K562 (cell line): ENCODE measurements at regions of chrX and their contacts with region 1.

Region 1: DNA sequence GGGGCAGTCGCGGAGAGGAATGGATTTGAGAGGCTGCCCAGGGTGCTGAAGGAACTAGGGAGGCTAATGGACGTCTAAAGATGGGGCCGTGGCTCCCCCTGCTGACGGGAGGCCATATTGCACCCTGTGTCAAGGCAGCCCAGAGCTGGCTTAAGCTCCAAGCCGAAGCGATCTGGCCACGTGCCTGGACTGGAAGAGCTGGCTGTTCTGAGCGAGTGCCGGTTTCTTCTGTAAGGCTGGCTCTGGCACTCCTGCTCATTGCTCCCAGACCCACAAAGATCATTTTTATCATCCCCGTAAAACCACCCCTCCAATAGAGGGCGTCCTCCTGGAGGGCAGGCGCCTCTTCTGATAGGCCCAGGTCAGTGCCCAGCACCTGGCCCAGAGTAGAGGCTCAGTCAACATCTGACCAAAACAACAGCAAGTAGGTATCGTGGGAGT is 5.6 kb downstream of the PNCK start:
- DNase-seq: peak; percentile 72 to 86 (median 74)
- ATAC-seq: peak; percentile 90
- H3K4me3 ChIP-seq: no peak overlapping the region
- H3K27ac ChIP-seq: no peak overlapping the region
- H3K4me1 ChIP-seq: peaks cover 5 to 43% of the 10 kb centered on the region in 2 experiments; a peak in 4 of 5 replicates
- H3K27me3 ChIP-seq: peaks cover 2 to 18% of the 10 kb centered on the region in 2 experiments; a peak in 3 of 5 replicates
- CTCF ChIP-seq: peak; percentile 82 to 91 (median 89)
- EP300 ChIP-seq: no peak
- POLR2A ChIP-seq: no peak
- RAD21 ChIP-seq: peak; percentile 62 to 76

Region 2: GRCh38 chrX:152941328-152942106 is 726.5 kb before region 1 on chrX:
- CTCF ChIA-PET with region 1: no interaction called
- POLR2A ChIA-PET with region 1: no interaction called
- in situ Hi-C with region 1: loop called (anchors 10 kb)
- intact Hi-C with region 1: no loop called
- DNase-seq: peak; percentile 91 to 95 (median 93)
- ATAC-seq: peak; percentile 97
- H3K4me3 ChIP-seq: peak overlapping the region; percentile 52
- H3K27ac ChIP-seq: peak overlapping the region; percentile 82
- H3K4me1 ChIP-seq: peaks cover 2 to 6% of the 10 kb centered on the region in 2 experiments; a peak in 4 of 5 replicates
- H3K27me3 ChIP-seq: no peaks in the 10 kb centered on the region; a peak in 1 of 5 replicates
- CTCF ChIP-seq: peak; percentile 83 to 89 (median 85)
- EP300 ChIP-seq: 0 out of 2 replicates have a peak, but pooled peaks have one; percentile 29
- POLR2A ChIP-seq: peak; percentile 44; the same call in 1 of the 2 replicates
- RAD21 ChIP-seq: peak; percentile 89 to 96

Region 3: DNA sequence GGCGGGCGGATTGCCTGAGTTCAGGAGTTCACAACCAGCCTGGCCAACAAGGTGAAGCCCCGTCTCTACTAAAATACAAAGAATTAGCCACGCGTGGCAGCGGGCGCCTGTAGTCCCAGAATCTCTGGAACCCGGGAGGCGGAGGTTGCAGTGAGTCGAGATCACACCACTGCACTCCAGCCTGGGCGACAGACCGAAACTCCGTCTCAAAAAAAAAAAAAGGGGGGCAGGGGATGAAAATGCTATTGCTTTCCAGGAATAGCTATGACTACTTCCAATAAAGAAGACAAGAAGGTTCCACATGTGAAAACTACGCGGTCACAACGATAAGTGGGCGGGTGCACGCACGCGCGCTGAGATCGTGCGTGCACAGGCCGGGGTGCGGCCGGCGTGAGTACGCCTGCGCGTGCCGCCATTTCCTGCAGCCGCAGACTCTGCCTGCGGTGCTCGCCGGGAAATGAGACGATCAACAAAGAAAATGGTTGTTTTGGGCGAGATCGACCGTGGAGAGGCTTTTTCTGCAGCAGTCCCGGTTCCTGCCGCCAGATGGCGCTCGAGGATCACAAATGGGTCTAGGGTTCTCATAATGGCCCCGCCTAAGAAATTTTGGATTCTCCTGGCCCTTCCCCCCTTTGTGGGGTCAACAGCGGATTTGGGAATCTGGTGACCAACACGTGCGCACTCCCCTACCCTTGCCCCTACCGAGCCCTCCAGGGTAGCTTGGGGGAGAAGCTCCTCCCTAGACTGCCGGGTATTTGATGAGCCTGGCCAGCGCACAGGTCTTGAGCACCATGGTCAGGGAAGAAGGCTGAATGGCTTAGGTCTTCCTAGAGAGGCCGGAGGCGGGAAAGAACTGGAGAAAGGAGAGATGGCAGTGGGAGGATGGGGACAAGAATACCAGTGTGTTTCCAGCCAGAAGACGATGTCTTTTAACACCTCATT is 709.2 kb before region 1 on chrX:
- CTCF ChIA-PET with region 1: no interaction called
- POLR2A ChIA-PET with region 1: no interaction called
- in situ Hi-C with region 1: no loop called
- intact Hi-C with region 1: loop called (anchors 10 kb)
- DNase-seq: peak; percentile 85 to 93 (median 88)
- ATAC-seq: peak; percentile 99
- H3K4me3 ChIP-seq: peak overlapping the region; percentile 3; the same call in 1 of the 2 replicates
- H3K27ac ChIP-seq: peak overlapping the region; percentile 59
- H3K4me1 ChIP-seq: peaks cover 11 to 13% of the 10 kb centered on the region in 2 experiments; a peak in 4 of 5 replicates
- H3K27me3 ChIP-seq: no peaks in the 10 kb centered on the region
- CTCF ChIP-seq: peak; percentile 77 to 94 (median 91)
- EP300 ChIP-seq: peak; percentile 35; the same call in 1 of the 2 replicates
- POLR2A ChIP-seq: peak; percentile 51; the same call in 1 of the 2 replicates
- RAD21 ChIP-seq: peak; percentile 84 to 95

Region 4: DNA sequence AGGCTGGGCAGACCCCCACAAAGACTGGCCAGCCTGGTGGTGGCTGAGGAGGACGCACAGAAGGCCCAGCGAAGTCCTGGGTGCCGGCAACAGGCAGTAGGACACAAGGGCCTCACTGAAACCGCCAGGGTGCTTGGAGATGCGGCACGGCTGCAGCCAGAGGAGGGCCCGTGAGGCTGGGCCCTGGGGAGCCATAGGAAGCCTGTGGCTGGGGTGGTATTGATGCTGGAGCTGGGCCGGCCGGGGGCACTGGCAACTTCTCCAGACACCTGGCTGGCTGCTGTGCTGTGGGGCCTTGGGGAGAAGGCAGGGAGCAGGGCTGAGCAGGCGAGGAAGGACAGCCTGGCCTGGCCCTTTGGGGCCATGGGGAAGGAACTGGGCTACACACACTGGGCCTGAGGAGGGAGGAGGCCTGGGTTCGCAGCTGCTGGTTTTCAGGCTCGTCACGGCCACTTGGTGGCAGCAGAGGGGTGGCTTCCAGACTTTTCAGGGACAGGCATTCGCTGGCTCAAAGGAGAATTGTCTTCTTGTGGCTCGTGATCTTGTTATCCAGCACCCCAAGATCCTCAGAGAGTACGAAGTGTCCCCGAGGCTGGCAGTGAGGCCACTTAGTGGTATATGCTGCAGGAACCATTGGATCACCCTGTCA is 113.3 kb before region 1 on chrX:
- CTCF ChIA-PET with region 1: interaction called, 12 read pairs
- POLR2A ChIA-PET with region 1: no interaction called
- in situ Hi-C with region 1: loop called (anchors 5 kb)
- intact Hi-C with region 1: loop called (anchors 5 kb)
- DNase-seq: peak; percentile 68 to 75 (median 68)
- ATAC-seq: peak; percentile 92
- H3K4me3 ChIP-seq: no peak overlapping the region
- H3K27ac ChIP-seq: no peak overlapping the region
- H3K4me1 ChIP-seq: peaks cover 0 to 27% of the 10 kb centered on the region in 2 experiments; a peak in 2 of 5 replicates
- H3K27me3 ChIP-seq: peaks cover 31 to 80% of the 10 kb centered on the region in 2 experiments
- CTCF ChIP-seq: peak; percentile 76 to 87 (median 81)
- EP300 ChIP-seq: no peak
- POLR2A ChIP-seq: no peak
- RAD21 ChIP-seq: peak; percentile 41 to 75